Dendritic cell treated with granulocyte-macrophage colony-stimulating factor and Interleukin-4, amounts not matched to agents 40 ng/mL and 50 ng/mL, for 4 days (primary cell): ENCODE measurements at regions of chr7 and their contacts with region 1.

Region 1: DNA sequence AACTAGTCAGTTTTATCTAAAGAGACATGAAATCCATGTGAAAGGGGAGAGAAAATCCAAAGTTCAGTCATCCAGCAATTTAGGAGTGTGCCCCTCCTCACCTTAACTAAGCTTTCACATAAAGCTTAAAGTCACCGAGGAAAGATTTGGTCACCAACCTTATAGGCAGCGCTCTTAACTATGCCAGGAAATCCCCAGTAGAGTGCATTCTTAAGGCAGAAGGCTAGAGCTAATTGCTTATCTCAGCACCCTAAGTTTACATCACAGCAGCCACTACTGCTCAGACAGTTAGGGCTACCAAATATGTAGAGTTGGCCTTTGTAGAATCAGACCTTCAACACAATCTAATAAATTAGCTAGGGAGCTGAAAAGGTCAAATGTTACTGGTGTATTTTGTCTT is 47.9 kb downstream of the MTPN start:
- H3K4me3 Mint-ChIP-seq: no peak overlapping the region
- H3K27ac Mint-ChIP-seq: no peak overlapping the region
- H3K4me1 Mint-ChIP-seq: peaks cover 23% of the 10 kb centered on the region
- H3K27me3 Mint-ChIP-seq: no peaks in the 10 kb centered on the region

Region 2: DNA sequence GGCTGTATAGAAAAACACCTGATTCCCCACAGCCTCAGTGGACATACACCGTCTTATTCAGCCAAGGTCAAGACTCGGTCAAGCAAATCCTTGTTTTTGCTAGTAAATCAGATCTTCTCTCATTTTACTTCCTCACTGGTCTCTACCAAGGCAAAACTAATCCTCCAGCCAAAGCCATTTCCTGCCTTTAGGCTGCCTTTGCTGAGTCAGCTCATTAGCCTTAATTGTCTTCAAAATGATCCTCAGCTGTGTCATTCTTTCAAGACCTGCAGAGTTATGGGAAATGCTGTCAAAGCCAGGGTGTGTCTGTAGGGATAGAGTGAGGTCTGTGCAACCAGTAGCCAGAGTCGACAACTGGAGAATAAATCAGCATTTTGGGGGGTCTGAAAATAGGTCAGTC is 73.4 kb before region 1 on chr7:
- intact Hi-C with region 1: no loop called
- H3K4me3 Mint-ChIP-seq: no peak overlapping the region
- H3K27ac Mint-ChIP-seq: no peak overlapping the region
- H3K4me1 Mint-ChIP-seq: no peaks in the 10 kb centered on the region
- H3K27me3 Mint-ChIP-seq: peaks cover 2% of the 10 kb centered on the region

Region 3: GRCh38 chr7:135964274-135964673 is 35.0 kb after region 1 on chr7:
- intact Hi-C with region 1: loop called (anchors 5 kb)
- H3K4me3 Mint-ChIP-seq: no peak overlapping the region
- H3K27ac Mint-ChIP-seq: no peak overlapping the region
- H3K4me1 Mint-ChIP-seq: peaks cover 55% of the 10 kb centered on the region
- H3K27me3 Mint-ChIP-seq: no peaks in the 10 kb centered on the region